CD4-positive, alpha-beta memory T cell (primary cell): ENCODE measurements at regions of chr7 and their contacts with region 1.

Region 1: GRCh38 chr7:129054438-129055293 is at the start of gene TNPO3:
- DNase-seq: peak; percentile 87 to 91 (median 88)
- H3K4me3 ChIP-seq: peak within 1 kb of the TSS; percentile 80 to 91
- H3K4me3 Mint-ChIP-seq: peak within 1 kb of the TSS; percentile 94 to 100 (median 98)
- H3K27ac ChIP-seq: peak within 1 kb of the TSS; percentile 82
- H3K27ac Mint-ChIP-seq: peak within 1 kb of the TSS; percentile 98 to 100 (median 99)
- H3K4me1 ChIP-seq: peaks cover 31% of the 10 kb centered on the region
- H3K4me1 Mint-ChIP-seq: peaks cover 20 to 51% (median 38%) of the 10 kb centered on the region in 4 donors
- H3K27me3 ChIP-seq: no peaks in the 10 kb centered on the region
- H3K27me3 Mint-ChIP-seq: peaks cover 3 to 7% of the 10 kb centered on the region in 2 donors
- total RNA-seq, gene TNPO3: 41.7 to 44.5 TPM

Region 2: GRCh38 chr7:128739048-128739962 is 315.4 kb before region 1 on chr7 and contains the start of gene CALU:
- CTCF ChIA-PET with region 1: no interaction called
- POLR2A ChIA-PET with region 1: interaction called, 6 read pairs
- intact Hi-C with region 1: loop called (anchors 5 kb)
- DNase-seq: peak; percentile 93 to 95 (median 94)
- H3K4me3 ChIP-seq: peak within 1 kb of the TSS; percentile 80 to 82
- H3K4me3 Mint-ChIP-seq: peak within 1 kb of the TSS; percentile 98 to 100 (median 99)
- H3K27ac ChIP-seq: peak within 1 kb of the TSS; percentile 91
- H3K27ac Mint-ChIP-seq: peak within 1 kb of the TSS; percentile 97 to 100 (median 98)
- H3K4me1 ChIP-seq: peaks cover 38% of the 10 kb centered on the region
- H3K4me1 Mint-ChIP-seq: peaks cover 27 to 50% (median 39%) of the 10 kb centered on the region in 4 donors
- H3K27me3 ChIP-seq: no peaks in the 10 kb centered on the region
- H3K27me3 Mint-ChIP-seq: peaks cover 0 to 3% of the 10 kb centered on the region in 2 donors
- total RNA-seq, gene CALU: 18.4 to 20.6 TPM

Region 3: GRCh38 chr7:129066290-129067131 is 11.8 kb after region 1 on chr7:
- CTCF ChIA-PET with region 1: interaction called, 3 read pairs
- POLR2A ChIA-PET with region 1: interaction called, 18 read pairs
- intact Hi-C with region 1: no loop called
- DNase-seq: no peak
- H3K4me3 ChIP-seq: no peak overlapping the region
- H3K4me3 Mint-ChIP-seq: no peak overlapping the region
- H3K27ac ChIP-seq: no peak overlapping the region
- H3K27ac Mint-ChIP-seq: no peak overlapping the region
- H3K4me1 ChIP-seq: no peaks in the 10 kb centered on the region
- H3K4me1 Mint-ChIP-seq: no peaks in the 10 kb centered on the region
- H3K27me3 ChIP-seq: no peaks in the 10 kb centered on the region
- H3K27me3 Mint-ChIP-seq: peaks cover 9 to 11% of the 10 kb centered on the region in 2 donors